Activated T-helper 1 cell treated with anti-CD3 and anti-CD28 coated beads, Interleukin-12 subunit alpha, Interleukin-12 subunit beta, Interleukin-2, Interleukin-4 antibody, amounts not matched to agents 30 ng/mL and 10 ng/mL and 1 ng/mL, durations not matched to agents 14 hours and 24 hours and 36 hours (primary cell): ENCODE measurements at regions of chr11 and their contacts with region 1.

Region 1: GRCh38 chr11:66288671-66289547 is at the start of gene YIF1A:
- DNase-seq: peak; percentile 99
- H3K4me3 Mint-ChIP-seq: peak within 1 kb of the TSS; percentile 95
- H3K27ac Mint-ChIP-seq: peak within 1 kb of the TSS; percentile 99
- H3K4me1 Mint-ChIP-seq: peaks cover 39% of the 10 kb centered on the region
- H3K27me3 Mint-ChIP-seq: peaks cover 28% of the 10 kb centered on the region
- total RNA-seq, gene YIF1A: 125 and 127 TPM in 2 replicates

Region 2: DNA sequence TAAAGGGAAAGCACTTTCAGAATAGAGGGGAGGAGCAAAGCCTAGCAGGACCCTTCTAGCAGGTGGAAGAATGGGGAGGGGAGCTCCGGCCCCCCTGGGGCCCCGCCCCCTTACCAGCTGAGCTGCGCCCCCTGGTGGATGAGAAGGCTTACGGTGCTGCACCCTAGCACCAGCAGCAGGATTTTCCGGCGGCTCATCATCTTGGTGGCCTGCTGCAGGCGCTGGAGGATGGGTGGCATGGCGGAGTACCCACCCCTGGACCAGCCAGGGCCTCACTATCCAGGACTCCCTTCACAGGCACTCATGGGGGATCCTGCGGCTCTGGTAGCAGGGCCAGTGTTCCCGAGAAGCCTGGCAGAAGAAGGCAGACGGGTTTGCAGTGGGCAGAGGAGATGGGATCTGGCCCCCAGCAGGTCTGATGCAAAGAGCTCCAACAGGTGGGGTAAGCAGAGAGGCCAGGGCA is 243.7 kb before region 1 on chr11:
- intact Hi-C with region 1: no loop called
- DNase-seq: peak; percentile 79
- H3K4me3 Mint-ChIP-seq: no peak overlapping the region
- H3K27ac Mint-ChIP-seq: peak overlapping the region; percentile 11
- H3K4me1 Mint-ChIP-seq: peaks cover 16% of the 10 kb centered on the region
- H3K27me3 Mint-ChIP-seq: peaks cover 7% of the 10 kb centered on the region

Region 3: GRCh38 chr11:66222358-66223149 is 66.4 kb before region 1 on chr11:
- intact Hi-C with region 1: loop called (anchors 1 kb)
- DNase-seq: peak; percentile 92
- H3K4me3 Mint-ChIP-seq: peak overlapping the region; percentile 20
- H3K27ac Mint-ChIP-seq: peak overlapping the region; percentile 97
- H3K4me1 Mint-ChIP-seq: peaks cover 20% of the 10 kb centered on the region
- H3K27me3 Mint-ChIP-seq: no peaks in the 10 kb centered on the region

Region 4: DNA sequence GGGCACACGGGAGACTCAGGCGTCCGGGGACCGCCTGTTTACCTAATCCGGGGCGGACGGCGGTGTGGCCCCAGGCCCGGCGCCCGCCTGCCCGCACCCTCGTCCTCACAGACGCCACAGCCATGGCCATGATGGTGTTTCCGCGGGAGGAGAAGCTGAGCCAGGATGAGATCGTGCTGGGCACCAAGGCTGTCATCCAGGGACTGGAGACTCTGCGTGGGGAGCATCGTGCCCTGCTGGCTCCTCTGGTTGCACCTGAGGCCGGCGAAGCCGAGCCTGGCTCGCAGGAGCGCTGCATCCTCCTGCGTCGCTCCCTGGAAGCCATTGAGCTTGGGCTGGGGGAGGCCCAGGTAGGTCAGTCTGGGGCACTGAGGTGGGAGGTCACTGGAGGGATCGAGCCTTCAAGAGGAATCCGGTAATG is 30.4 kb before region 1 on chr11:
- intact Hi-C with region 1: loop called (anchors 1 kb)
- DNase-seq: no peak
- H3K4me3 Mint-ChIP-seq: peak overlapping the region; percentile 93
- H3K27ac Mint-ChIP-seq: peak overlapping the region; percentile 61
- H3K4me1 Mint-ChIP-seq: peaks cover 21% of the 10 kb centered on the region
- H3K27me3 Mint-ChIP-seq: no peaks in the 10 kb centered on the region

Region 5: DNA sequence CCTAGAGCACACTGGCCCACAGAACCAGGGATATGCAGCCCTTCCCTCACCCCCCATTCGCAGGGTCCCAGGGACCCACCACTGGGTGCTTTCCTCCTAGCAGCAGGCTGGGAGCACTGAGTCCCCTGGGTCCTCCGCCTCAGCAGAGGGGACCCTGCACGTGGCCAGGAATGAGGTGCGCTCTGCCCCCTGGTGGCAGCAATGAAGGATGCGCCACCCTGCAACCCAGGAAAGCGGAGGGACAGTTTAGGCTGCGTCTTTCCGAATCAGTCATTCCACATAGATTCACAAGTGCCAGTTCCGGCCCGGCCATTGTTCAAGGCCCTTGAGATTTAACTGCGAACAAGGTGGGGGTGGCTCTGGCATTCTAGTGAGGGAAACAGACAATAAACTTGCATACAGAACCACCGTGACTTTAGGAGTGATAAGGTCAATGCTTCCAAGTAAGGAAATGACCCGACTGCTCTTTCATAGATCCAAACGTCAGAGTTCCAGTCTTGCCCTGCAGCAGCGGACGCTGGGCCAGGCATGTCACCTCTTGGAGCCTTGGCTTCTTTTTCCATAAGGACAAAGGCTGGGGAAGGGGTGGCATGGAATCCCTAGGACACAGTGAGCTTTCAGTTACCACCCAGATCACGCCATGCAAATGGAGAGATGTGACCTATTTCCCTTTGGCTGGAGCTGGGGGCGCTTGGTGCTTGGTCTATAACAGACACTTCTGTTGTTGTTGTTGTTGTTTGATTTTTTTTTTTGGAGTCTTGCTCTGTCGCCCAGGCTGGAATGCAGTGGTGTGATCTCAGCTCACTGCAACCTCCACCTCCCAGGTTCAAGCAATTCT is 39.6 kb after region 1 on chr11:
- intact Hi-C with region 1: loop called (anchors 1 kb)
- DNase-seq: peak; percentile 73
- H3K4me3 Mint-ChIP-seq: peak overlapping the region; percentile 59
- H3K27ac Mint-ChIP-seq: peak overlapping the region; percentile 61
- H3K4me1 Mint-ChIP-seq: peaks cover 25% of the 10 kb centered on the region
- H3K27me3 Mint-ChIP-seq: no peaks in the 10 kb centered on the region

Region 6: GRCh38 chr11:66421492-66422205 is 132.7 kb after region 1 on chr11:
- intact Hi-C with region 1: loop called (anchors 1 kb)
- DNase-seq: peak; percentile 83
- H3K4me3 Mint-ChIP-seq: no peak overlapping the region
- H3K27ac Mint-ChIP-seq: peak overlapping the region; percentile 53
- H3K4me1 Mint-ChIP-seq: peaks cover 28% of the 10 kb centered on the region
- H3K27me3 Mint-ChIP-seq: peaks cover 21% of the 10 kb centered on the region